Mammary epithelial cell (primary cell): ENCODE measurements at regions of chr6 and their contacts with region 1.

Region 1: DNA sequence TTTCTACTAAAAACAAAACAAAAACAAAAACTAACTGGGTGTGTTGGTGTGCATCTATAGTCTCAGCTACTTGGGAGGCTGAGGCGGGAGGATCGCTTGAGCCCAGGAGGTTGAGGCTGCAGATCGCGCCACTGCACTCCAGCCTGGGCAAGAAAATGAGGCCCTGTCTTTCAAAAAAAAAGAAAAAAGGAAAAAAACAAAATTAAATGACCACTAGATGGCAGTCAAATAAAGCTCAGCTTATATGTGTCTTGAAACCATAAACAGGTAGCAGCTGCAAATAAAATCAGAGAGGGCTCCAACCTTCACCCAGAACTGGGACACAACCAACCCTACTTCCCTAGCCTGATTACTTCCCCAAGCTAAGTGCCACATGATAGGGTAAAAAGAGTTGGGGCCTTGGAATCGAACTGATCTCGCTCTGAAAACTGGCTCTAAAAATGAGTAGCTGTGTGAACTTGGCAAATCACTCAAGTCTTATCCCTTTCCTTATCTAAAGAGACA is 67.1 kb upstream of the ADGRF4 start:
- DNase-seq: peak; percentile 60
- H3K4me3 ChIP-seq: no peak overlapping the region
- H3K27ac ChIP-seq: no peak overlapping the region
- H3K4me1 ChIP-seq: peaks cover 5% of the 10 kb centered on the region
- H3K27me3 ChIP-seq: no peaks in the 10 kb centered on the region
- CTCF ChIP-seq: peak; percentile 49 to 59

Region 2: DNA sequence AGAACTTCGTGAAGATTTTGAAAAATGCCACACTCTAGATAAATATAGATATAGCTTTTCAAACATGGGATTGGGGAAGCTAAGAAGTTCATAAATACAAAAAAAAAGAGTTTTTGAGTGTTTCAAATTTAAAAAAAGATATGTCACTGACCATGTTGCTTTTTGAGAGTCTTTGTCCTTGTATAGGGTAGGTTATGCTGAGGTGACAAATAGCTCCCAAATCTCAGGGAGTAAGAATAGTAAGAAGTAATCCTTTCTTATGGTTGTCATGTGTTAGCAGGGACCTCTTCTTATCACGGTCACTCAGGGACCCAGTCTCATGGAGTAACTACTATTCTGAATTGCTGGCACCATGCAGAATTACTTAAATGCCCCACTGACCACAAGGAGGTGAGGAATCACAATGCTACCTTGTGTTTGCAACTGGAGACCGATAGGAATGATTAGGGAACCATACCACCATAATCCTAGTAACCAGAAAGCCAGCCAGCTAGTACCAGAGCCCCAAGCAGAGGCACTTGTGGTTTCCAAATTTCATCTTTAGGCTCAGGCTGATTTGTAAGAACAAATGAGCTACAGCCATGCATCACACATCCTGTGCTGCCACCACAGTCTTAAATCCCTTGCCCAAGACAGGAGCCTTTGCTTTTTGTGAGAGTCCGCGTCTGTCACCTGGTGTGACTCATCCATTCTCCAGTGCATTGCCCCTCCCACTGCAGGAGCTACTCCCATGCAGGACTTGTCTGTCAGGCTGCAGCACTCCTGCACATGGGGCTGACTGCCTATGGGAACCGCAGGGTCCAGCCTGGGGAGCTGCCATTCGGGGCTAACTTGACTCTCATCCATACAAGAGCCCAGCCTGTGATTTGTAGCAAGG is 24.6 kb after region 1 on chr6:
- CTCF ChIA-PET with region 1: no interaction called
- dilution Hi-C with region 1: no loop called
- in situ Hi-C with region 1: no loop called
- intact Hi-C with region 1: no loop called
- DNase-seq: peak; percentile 87
- H3K4me3 ChIP-seq: no peak overlapping the region
- H3K27ac ChIP-seq: no peak overlapping the region
- H3K4me1 ChIP-seq: peaks cover 30% of the 10 kb centered on the region
- H3K27me3 ChIP-seq: no peaks in the 10 kb centered on the region
- CTCF ChIP-seq: no peak

Region 3: GRCh38 chr6:47780510-47781356 is 149.4 kb after region 1 on chr6:
- CTCF ChIA-PET with region 1: no interaction called
- dilution Hi-C with region 1: no loop called
- in situ Hi-C with region 1: loop called in 1 of 2 experiments (anchors 5 kb)
- intact Hi-C with region 1: loop called (anchors 1 kb)
- DNase-seq: peak; percentile 73
- H3K4me3 ChIP-seq: no peak overlapping the region
- H3K27ac ChIP-seq: no peak overlapping the region
- H3K4me1 ChIP-seq: peaks cover 9% of the 10 kb centered on the region
- H3K27me3 ChIP-seq: no peaks in the 10 kb centered on the region
- CTCF ChIP-seq: peak; percentile 65 to 69

Region 4: GRCh38 chr6:49430187-49430586 is 1798.9 kb after region 1 on chr6:
- CTCF ChIA-PET with region 1: no interaction called
- dilution Hi-C with region 1: no loop called
- in situ Hi-C with region 1: loop called (anchors 25 kb)
- intact Hi-C with region 1: no loop called
- DNase-seq: peak; percentile 16
- H3K4me3 ChIP-seq: no peak overlapping the region
- H3K27ac ChIP-seq: no peak overlapping the region
- H3K4me1 ChIP-seq: no peaks in the 10 kb centered on the region
- H3K27me3 ChIP-seq: no peaks in the 10 kb centered on the region
- CTCF ChIP-seq: no peak